ENCODE measurements at regions of chr6 and their contacts with region 1.

Region 1: DNA sequence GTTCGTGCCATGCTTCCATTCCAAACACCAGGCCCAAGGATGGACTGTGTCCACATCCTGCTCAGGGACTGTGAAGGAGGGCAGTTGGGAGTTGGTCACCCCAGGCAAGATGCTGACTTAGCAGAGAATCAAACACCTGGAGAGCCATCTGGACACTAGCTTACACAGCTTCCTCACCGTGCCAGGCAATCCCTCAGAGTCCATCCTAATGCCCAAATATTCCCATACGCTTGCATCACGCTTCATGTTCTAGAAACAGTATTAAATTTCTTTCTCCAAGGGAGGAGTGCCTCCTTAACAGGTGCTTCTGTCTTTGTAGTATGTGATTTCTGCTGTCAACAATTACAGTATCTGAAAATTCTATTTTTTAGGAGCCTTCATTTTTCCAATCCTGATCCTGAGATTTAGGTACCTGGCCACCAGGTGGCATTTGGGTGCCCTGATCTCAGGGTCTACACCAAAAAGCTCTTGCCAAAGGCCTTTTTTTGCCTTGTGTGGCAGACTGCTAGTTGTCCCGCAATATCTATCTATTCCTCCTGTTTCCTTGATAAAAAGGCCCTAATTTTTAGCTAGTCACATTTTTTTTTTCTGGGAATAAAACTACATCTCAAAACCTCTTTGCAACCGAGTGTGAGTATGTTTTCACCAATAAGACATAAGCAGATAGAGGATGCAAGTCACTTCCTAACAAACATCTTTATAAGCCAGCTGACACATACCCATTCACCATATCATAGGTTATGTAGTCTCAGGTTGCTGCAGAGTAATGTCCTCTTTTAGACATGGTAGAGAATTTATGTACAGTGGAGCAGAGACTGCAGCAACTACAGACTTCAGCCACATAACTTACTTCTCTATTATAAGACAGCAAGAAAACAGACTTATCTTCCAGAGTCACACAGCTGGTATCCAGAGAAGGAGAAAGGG is 85.0 kb downstream of the PREP start:
- DNase-seq: no peak
- H3K4me3 ChIP-seq: no peak overlapping the region
- H3K27ac ChIP-seq: no peak overlapping the region
- H3K4me1 ChIP-seq: no peaks in the 10 kb centered on the region
- H3K27me3 ChIP-seq: no peaks in the 10 kb centered on the region
- CTCF ChIP-seq: peak; percentile 17

Region 2: DNA sequence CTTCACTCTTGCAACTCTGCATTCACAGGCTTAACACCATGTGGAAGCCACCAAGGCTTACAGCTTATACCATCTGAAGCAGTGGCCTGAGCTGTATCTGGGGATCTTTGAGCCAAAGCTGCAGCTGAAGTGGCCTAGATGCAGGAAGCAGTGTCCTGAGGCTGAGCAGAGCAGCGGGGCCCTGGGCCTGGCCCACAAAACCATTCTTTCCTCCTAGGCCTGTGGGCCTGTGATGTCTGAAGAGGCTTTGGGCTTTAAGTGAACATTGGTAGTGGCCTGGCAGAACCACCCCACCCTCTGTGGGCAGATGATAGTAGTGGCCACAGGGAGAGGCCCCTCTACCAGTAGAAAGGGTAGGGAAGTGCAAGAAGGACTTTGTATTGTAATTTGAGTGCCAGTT is 91.9 kb after region 1 on chr6:
- intact Hi-C with region 1: loop called (anchors 5 kb)
- DNase-seq: no peak
- H3K4me3 ChIP-seq: no peak overlapping the region
- H3K27ac ChIP-seq: no peak overlapping the region
- H3K4me1 ChIP-seq: no peaks in the 10 kb centered on the region
- H3K27me3 ChIP-seq: no peaks in the 10 kb centered on the region
- CTCF ChIP-seq: no peak

Region 3: GRCh38 chr6:105669232-105669631 is 351.4 kb after region 1 on chr6:
- intact Hi-C with region 1: no loop called
- DNase-seq: no peak
- H3K4me3 ChIP-seq: no peak overlapping the region
- H3K27ac ChIP-seq: no peak overlapping the region
- H3K4me1 ChIP-seq: no peaks in the 10 kb centered on the region
- H3K27me3 ChIP-seq: no peaks in the 10 kb centered on the region
- CTCF ChIP-seq: no peak

Measured in colonic mucosa (tissue), 4 donors.